ENCODE measurements at regions of chrX and their contacts with region 1.

Region 1: GRCh38 chrX:133771086-133771646 is 214.2 kb downstream of the GPC3 start:
- DNase-seq: no peak
- ATAC-seq: no peak
- H3K4me3 ChIP-seq: no peak overlapping the region
- H3K27ac ChIP-seq: no peak overlapping the region
- H3K4me1 ChIP-seq: no peaks in the 10 kb centered on the region
- H3K27me3 ChIP-seq: peaks cover 0 to 47% (median 0%) of the 10 kb centered on the region in 7 donors
- CTCF ChIP-seq: no peak

Region 2: DNA sequence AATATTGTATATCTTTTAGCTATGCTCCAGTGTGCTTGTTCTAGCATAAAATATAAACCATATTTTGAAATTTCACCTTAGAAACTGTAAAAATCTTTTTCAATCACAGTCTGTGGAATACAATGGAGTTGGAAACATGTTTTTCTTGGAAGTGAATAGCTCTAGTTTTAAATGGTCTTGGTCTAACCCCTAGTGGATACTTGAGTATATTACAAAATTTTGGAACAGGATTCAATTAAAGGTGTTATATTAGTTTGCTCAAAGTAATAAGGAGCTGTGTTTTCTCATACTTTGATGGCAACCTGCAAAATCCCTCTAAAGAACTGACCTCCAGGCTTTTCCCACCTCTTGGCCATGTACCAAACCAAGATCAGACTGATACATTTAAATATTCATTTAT is 1699.9 kb before region 1 on chrX:
- intact Hi-C with region 1: loop called in 1 of 10 experiments (anchors 5 kb)
- DNase-seq: no peak
- ATAC-seq: no peak
- H3K4me3 ChIP-seq: peak overlapping the region in 1 of 10 donors; percentile 3
- H3K27ac ChIP-seq: no peak overlapping the region
- H3K4me1 ChIP-seq: no peaks in the 10 kb centered on the region
- H3K27me3 ChIP-seq: peaks cover 0 to 65% (median 0%) of the 10 kb centered on the region in 7 donors
- CTCF ChIP-seq: peak in 6 of 9 donors; percentile 22 to 44 (median 34)

Region 3: DNA sequence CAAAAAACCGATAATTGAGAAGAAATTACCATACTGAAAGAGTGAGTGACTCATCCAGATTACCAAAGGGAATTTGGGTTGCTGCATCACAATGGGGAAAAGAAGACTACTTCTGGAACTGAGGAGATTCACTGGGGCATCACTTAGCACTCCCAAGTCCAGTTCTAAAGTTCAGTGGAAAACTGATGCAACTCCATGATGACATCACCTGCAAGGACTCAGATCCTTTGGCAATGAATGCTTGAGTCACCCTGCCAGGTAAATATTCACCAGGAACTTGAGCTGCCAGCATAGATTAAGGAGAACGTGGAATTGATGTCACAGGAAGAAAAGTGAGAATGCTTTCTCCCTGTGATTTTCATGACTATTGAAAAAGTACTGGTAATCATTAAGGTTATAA is 1618.6 kb after region 1 on chrX:
- intact Hi-C with region 1: no loop called
- DNase-seq: no peak
- ATAC-seq: no peak
- H3K4me3 ChIP-seq: no peak overlapping the region
- H3K27ac ChIP-seq: no peak overlapping the region
- H3K4me1 ChIP-seq: no peaks in the 10 kb centered on the region
- H3K27me3 ChIP-seq: no peaks in the 10 kb centered on the region
- CTCF ChIP-seq: no peak

Measured in heart right ventricle (tissue), 16 donors.